ENCODE measurements at regions of chr3 and their contacts with region 1.

Region 1: GRCh38 chr3:57164217-57164656 is 916 bp downstream of the IL17RD start:
- DNase-seq: no peak
- H3K4me3 ChIP-seq: peak overlapping the region; percentile 51
- H3K27ac ChIP-seq: no peak overlapping the region
- H3K4me1 ChIP-seq: peaks cover 16% of the 10 kb centered on the region
- H3K27me3 ChIP-seq: peaks cover 4% of the 10 kb centered on the region
- CTCF ChIP-seq: no peak

Region 2: GRCh38 chr3:56357266-56357665 is 807.0 kb before region 1 on chr3:
- CTCF ChIA-PET with region 1: no interaction called
- POLR2A ChIA-PET with region 1: no interaction called
- intact Hi-C with region 1: no loop called
- DNase-seq: no peak
- H3K4me3 ChIP-seq: no peak overlapping the region
- H3K27ac ChIP-seq: no peak overlapping the region
- H3K4me1 ChIP-seq: no peaks in the 10 kb centered on the region
- H3K27me3 ChIP-seq: no peaks in the 10 kb centered on the region
- CTCF ChIP-seq: no peak

Region 3: GRCh38 chr3:57382933-57383332 is 218.7 kb after region 1 on chr3:
- CTCF ChIA-PET with region 1: no interaction called
- POLR2A ChIA-PET with region 1: interaction called, 16 read pairs
- intact Hi-C with region 1: no loop called
- DNase-seq: no peak
- H3K4me3 ChIP-seq: no peak overlapping the region
- H3K27ac ChIP-seq: no peak overlapping the region
- H3K4me1 ChIP-seq: no peaks in the 10 kb centered on the region
- H3K27me3 ChIP-seq: no peaks in the 10 kb centered on the region
- CTCF ChIP-seq: no peak